ENCODE measurements at regions of chr12 and their contacts with region 1.

Region 1: DNA sequence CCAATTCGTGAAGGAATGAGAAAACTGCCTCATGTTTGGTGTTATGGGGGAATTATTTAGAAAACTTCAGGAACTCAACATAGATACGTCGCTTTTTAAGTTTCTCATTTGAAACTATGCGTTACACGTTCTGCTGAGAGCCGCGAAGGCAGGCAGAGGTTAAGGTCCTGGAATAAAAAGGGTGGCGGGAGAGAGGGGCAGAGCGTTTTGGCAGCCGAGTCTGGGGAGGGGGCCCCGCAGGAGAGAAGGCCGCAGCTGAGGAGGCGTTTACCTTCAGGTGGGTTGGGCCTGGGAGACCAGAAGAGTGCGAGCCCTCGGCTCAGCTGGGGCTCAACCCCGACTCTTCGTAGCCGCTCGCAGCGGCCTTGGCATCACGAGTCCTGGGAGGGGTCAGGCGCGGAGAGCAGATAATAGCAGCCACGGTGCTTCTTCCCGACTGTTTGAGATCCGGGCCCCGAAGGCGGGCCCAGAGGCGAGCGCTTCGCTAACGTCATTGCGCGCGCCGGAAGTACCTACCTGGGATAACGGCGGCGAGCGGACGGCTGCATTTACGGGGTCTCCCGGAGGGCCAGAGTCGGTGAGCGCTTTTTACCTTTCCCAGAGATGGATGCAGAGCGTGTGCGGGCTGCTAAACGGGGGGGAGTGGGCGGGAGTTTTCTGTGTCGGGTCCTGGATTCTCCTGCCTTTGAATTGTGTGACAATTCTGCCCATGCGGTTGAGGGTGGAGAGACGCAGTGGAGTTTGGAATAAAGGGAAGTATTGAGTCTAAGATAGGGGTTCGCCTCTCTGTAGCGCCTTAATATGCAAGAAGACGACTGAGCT is at the starts of genes PPHLN1 and ZCRB1:
- DNase-seq: peak; percentile 84
- H3K4me3 Mint-ChIP-seq: peak within 1 kb of the TSS; percentile 94
- H3K27ac Mint-ChIP-seq: peak within 1 kb of the TSS; percentile 94
- H3K4me1 Mint-ChIP-seq: peaks cover 40% of the 10 kb centered on the region
- H3K27me3 Mint-ChIP-seq: no peaks in the 10 kb centered on the region
- total RNA-seq, gene PPHLN1: 52.9 to 63.3 TPM
- total RNA-seq, gene ZCRB1: 79.5 to 84.2 TPM

Region 2: DNA sequence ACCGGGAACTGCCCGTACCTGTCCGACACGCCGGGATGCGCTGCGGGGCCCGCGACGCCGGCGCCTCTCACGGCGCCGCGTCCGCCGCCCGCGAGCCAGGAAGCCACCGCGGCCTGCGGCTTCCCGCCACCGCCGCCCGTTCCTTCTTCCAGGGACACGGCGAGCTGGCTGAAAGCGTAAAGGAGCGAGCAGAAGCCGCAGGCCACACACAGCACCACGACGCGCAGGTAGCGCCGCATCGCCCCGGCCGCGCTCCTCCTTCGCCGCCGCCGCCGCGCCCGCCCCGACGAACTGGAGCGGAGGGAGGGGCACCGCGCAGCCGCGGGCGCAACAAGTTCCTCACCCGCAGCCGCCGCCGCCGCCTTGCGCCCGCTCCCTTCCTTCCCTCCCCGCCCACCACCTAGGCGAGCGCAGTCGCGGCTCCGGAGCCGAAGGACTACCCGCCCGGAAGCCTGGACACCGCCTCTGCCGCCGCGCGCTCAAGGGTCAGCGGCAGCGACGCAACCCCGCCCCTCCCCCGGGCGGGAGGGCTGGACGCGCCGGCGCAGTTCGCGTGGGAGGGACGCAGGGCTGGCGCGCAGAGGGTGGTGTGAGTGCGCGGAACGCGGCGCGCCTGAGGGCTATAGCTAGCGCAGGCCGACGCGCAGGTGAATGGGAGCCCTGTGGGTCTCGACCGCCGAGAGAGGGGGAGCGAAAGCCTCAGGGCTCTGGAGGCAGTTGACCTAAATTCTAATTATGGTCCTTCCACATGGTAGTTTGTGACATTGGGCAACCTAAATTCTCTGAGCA is 181.3 kb before region 1 on chr12 and contains the start of gene GXYLT1:
- CTCF ChIA-PET with region 1: no interaction called
- intact Hi-C with region 1: loop called (anchors 1 kb)
- DNase-seq: peak; percentile 78
- H3K4me3 Mint-ChIP-seq: peak within 1 kb of the TSS; percentile 90
- H3K27ac Mint-ChIP-seq: peak within 1 kb of the TSS; percentile 75
- H3K4me1 Mint-ChIP-seq: peaks cover 28% of the 10 kb centered on the region
- H3K27me3 Mint-ChIP-seq: no peaks in the 10 kb centered on the region
- total RNA-seq, gene GXYLT1: 4.6 to 5.1 TPM

Region 3: GRCh38 chr12:42299392-42300308 is 26.2 kb before region 1 on chr12:
- CTCF ChIA-PET with region 1: interaction called, 3 read pairs
- intact Hi-C with region 1: loop called (anchors 1 kb)
- DNase-seq: peak; percentile 91
- H3K4me3 Mint-ChIP-seq: no peak overlapping the region
- H3K27ac Mint-ChIP-seq: peak overlapping the region; percentile 36
- H3K4me1 Mint-ChIP-seq: peaks cover 14% of the 10 kb centered on the region
- H3K27me3 Mint-ChIP-seq: no peaks in the 10 kb centered on the region

Region 4: DNA sequence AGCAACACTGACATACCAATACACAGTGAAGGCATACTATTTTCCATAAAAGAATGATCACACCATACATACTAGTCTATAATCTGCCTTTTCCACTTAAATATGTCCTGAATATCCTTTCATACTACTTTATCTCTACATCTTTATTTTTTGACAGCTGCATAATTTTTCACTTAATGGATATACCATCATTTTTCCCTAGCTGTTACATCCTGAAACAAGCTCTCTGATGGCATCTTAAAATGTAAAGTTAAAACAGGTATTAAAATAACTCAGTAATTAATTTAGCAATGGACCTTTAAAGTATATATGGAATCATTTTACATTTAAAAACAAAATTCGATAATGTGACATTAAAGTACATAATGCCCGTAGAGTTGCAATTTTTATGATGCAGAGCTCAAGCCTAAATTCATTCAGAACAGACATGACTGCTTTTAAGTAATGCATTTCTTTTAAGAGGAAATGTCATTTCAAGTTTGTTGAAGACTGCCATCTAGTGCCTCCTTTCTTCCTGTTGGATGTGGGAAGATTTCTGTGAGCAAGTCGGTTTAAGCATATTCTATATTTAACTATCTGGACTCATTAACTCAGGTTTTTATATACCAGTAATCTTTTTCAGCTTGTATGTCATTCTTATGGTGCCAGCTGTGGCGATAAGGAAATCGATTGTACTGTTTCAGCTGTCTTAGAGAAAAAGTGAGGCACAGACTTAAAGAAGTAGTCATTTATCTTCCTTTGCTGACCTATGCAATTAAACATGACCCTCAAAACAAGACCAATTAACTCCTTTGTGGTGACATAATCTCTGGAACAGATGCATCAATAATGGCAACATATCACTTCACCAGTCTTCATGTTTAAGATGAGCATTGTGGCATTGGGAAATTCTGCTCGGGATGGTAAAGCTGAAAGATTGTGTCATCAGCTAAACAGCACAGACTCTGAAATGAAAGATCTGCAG is 243.4 kb after region 1 on chr12:
- CTCF ChIA-PET with region 1: no interaction called
- intact Hi-C with region 1: loop called (anchors 5 kb)
- DNase-seq: no peak
- H3K4me3 Mint-ChIP-seq: no peak overlapping the region
- H3K27ac Mint-ChIP-seq: no peak overlapping the region
- H3K4me1 Mint-ChIP-seq: no peaks in the 10 kb centered on the region
- H3K27me3 Mint-ChIP-seq: peaks cover 2% of the 10 kb centered on the region

Region 5: DNA sequence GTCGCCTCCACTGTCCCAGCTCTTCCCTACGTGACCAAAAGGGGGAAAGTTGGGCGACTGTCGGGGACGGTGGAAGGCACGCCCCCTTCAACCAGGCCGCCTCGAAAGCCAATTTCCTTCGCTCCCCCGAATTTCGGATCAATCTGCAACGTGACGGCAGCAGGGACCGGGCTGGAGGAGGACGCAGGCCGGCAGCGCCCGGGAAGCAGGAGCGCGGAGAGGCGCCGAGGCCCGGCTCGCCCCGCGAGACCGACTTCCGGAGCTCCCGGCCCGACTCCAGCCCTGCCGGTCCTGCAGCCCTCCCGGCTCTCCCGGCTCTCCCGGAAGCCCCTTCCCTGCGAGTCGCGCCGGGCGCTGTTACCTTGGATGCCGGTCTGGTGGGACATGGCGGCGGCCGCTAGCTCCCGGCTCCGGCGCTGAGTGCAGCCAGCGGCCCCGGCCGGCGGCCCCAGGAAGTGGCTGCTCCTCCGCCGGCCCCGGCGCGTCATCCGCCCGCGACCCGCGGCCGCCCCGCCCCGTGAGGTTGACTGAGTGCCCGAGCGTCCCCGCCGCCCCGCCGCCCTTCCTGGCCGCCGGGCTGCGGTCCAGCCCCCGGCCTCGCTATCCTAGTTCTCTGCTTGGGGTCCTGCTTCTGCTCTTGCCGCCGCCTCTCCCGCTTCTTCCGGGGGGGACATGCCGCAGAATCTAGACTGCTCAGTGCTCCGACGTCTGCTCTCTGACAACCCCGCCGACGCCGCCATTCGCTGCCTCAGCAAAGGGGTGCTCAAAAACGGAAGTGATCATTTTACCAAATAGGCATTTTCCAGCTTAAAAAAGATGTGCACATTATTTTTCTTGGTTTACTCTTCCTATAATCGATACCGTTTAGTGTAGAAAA is 1480.2 kb after region 1 on chr12 and contains the start of gene TWF1:
- CTCF ChIA-PET with region 1: no interaction called
- intact Hi-C with region 1: loop called (anchors 1 kb)
- DNase-seq: peak; percentile 88
- H3K4me3 Mint-ChIP-seq: peak within 1 kb of the TSS; percentile 98
- H3K27ac Mint-ChIP-seq: peak within 1 kb of the TSS; percentile 100
- H3K4me1 Mint-ChIP-seq: peaks cover 39% of the 10 kb centered on the region
- H3K27me3 Mint-ChIP-seq: no peaks in the 10 kb centered on the region
- total RNA-seq, gene TWF1: 12.9 to 15.3 TPM